ENCODE measurements at regions of chr5 and their contacts with region 1.

Region 1: DNA sequence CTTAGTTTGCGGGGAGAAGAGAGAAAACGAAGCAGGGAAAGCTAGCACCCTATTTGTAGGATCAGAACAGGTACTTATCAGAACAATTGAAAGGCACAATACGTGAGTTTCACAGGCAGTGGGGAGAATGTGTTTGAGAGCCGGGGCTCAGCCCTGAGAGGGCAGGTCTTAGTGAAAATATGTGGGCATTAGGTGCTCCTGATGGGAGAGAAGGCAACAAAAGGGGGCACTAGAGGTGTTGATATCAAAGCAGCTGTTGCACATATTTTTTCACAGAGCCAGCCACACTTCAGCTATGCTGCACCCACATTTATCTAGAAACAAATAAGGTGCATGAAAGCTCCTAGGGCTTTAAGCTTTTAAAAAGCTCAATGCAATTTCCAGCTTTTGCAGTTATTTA is 99.7 kb upstream of the MAN2A1 start:
- DNase-seq: peak; percentile 5
- ATAC-seq: no peak
- H3K4me3 Mint-ChIP-seq: no peak overlapping the region
- H3K27ac Mint-ChIP-seq: no peak overlapping the region
- H3K4me1 Mint-ChIP-seq: peaks cover 5% of the 10 kb centered on the region
- H3K27me3 Mint-ChIP-seq: peaks cover under 1% of the 10 kb centered on the region

Region 2: DNA sequence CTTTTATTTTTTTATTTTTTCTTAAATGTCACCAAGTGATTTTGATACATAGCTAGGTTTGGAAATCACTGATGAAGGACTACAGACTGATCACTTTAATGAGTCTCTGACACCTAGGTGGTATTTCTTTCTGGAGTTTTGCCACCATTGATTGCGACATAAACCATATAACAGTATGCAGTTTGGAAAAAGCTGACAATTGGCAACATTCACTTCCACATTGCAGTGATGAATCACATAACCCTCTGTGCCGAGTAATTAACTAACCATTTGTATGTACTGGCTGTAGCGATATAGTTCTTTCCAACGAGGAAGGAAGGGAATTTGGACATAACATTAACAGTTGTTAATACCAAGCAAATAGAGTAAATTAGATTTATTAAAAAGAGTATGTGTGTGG is 1696.3 kb before region 1 on chr5:
- CTCF ChIA-PET with region 1: no interaction called
- POLR2A ChIA-PET with region 1: no interaction called
- intact Hi-C with region 1: no loop called
- DNase-seq: no peak
- ATAC-seq: no peak
- H3K4me3 Mint-ChIP-seq: no peak overlapping the region
- H3K27ac Mint-ChIP-seq: no peak overlapping the region
- H3K4me1 Mint-ChIP-seq: peaks cover 3% of the 10 kb centered on the region
- H3K27me3 Mint-ChIP-seq: no peaks in the 10 kb centered on the region

Region 3: DNA sequence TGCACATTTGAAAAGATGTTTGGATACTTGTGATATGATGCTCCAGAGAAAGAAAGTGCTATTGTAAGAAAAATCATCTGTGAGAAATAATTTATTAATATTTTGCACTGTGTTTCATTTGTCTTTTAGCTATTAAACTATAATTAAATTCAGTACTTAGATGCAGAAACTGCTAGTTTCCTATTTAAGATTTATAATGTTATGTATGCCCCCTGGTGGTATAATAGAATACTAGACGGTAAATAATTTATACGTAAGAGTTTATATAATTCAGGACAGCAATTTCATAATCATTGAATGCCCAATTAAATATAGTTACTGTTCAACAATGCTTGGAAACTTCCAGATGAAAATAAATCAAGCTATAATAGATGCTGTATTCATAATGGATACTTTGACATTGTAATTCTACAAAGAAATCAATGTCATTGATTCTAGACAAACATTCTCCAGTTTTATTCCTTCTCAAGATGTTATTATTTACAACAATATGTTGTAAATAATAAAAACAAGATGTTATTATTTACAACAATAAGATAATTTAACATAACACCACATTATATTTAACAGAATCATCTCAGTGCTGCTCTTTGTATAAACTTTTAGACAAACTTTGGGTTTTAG is 1035.5 kb after region 1 on chr5:
- CTCF ChIA-PET with region 1: no interaction called
- POLR2A ChIA-PET with region 1: no interaction called
- intact Hi-C with region 1: loop called in 1 of 2 experiments (anchors 5 kb)
- DNase-seq: no peak
- ATAC-seq: no peak
- H3K4me3 Mint-ChIP-seq: no peak overlapping the region
- H3K27ac Mint-ChIP-seq: no peak overlapping the region
- H3K4me1 Mint-ChIP-seq: no peaks in the 10 kb centered on the region
- H3K27me3 Mint-ChIP-seq: no peaks in the 10 kb centered on the region